AG04449 (cell line): ENCODE measurements at regions of chr3 and their contacts with region 1.

Region 1: DNA sequence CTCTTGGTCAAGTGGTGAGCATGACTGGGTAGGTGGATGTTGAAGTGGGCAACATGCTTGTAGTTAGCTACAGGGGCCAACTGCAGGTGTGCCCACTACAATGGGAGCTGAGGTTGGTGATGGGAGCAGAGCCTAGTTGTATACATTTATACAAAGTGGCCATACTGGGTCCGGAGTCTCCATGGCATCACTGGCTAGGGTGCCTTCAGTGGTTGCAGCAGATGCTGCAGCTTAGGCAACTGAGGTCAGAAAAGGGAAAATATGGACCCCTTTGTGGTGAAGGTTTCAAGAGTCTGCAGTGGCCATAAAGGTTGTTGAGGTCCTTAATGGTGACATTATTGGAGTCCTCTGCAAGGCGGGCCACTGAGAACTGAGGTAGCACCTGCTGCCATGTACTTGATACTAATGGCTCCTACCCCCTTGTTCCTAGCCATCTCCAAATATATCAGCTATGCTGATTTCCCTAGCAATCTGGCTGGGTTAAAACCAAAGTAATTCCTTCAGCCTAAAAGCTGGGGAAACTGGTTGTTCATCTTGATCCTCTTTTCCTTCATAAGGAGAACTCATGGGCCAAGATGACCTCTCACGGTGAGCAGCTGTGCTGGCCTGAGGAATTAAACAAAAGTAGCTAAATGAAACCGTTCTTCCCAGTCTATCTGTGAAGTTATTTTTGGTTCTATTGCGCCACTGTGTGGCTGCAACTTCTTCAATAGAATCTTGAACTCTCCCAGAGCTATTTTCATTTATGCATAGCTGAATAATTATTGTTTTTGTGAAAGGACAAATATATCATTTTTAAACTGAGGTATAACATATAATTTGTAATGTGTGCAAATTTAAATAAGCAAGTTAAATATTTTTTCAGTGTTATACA is 76.0 kb upstream of the PLSCR4 start:
- DNase-seq: peak; percentile 26
- H3K4me3 ChIP-seq: no peak overlapping the region
- CTCF ChIP-seq: peak; percentile 40

Region 2: DNA sequence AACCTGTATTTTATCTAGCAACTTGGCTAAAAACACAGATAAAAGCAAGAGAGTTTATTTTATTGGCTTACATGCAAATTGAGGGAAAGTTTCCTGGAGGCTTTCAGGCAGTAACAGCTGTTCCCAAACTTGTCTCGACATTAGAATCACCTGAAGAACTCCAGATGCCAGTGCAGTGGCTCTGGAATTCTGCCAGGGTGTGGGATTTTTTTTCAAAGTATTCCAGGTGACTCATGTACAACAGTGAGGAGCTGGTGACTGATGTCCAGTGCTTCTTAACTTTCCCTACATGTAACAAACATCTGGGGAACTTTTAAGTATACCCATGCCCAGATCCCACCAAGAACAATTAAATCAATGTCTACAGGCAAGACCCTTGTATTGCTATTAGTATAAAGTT is 142.3 kb before region 1 on chr3:
- CTCF ChIA-PET with region 1: interaction called, 208 read pairs
- POLR2A ChIA-PET with region 1: interaction called, 3 read pairs
- DNase-seq: no peak
- H3K4me3 ChIP-seq: no peak overlapping the region
- CTCF ChIP-seq: no peak

Region 3: DNA sequence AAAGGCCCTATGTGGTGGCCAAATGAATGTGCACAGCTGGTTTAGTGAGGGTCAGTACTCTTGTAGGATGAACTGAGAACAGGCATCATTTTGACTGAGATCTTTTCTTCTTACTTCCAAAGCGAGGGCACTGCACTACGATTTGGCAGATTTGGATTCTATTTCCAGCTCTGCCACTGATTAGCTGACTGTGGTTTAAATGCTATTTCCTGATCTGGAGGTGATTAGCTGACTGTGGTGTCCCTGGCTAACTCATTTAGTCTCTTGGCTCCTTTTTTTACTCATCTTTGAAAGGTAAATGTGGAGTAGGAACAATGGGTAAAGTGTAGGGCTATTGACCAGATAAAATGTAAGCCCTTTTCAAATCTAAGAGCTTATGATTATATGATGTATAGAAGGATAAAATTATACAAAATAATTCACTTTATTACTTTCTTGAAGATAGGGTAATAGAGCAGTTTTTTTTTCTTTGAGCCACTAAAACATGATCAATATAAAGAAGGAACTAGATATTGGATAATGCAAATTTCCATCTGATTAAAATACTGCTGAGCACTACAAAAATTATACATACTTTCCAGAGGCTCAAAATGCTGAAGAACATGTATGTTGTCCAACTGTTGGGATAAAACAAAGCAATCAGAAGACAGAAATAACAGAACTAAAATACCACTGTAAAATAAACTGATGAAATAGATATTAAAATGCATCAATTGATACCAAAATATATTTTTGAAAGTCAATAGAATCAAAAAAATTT is 126.3 kb before region 1 on chr3:
- CTCF ChIA-PET with region 1: interaction called, 27 read pairs
- POLR2A ChIA-PET with region 1: no interaction called
- DNase-seq: no peak
- H3K4me3 ChIP-seq: no peak overlapping the region
- CTCF ChIP-seq: no peak

Region 4: DNA sequence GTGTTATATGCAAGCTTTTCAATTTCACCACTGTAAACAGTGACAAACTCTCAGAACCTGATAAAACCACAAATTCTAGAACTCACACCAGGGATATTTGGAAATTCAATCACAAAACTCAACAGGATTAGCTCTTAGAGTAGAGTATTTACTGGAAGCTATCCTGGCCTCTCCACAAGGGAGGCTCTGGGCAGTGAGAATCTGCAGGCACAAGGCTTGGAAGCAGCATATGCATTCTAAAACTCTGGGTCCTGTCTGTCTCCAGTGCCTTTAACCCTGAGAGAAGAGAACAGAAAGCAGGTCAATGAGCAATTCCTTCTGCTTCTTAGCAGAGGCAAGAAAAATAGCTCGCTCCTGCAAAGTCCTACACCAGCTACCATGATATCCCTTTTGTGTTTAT is 99.4 kb before region 1 on chr3:
- CTCF ChIA-PET with region 1: interaction called, 100 read pairs
- POLR2A ChIA-PET with region 1: no interaction called
- DNase-seq: no peak
- H3K4me3 ChIP-seq: no peak overlapping the region
- CTCF ChIP-seq: no peak

Region 5: DNA sequence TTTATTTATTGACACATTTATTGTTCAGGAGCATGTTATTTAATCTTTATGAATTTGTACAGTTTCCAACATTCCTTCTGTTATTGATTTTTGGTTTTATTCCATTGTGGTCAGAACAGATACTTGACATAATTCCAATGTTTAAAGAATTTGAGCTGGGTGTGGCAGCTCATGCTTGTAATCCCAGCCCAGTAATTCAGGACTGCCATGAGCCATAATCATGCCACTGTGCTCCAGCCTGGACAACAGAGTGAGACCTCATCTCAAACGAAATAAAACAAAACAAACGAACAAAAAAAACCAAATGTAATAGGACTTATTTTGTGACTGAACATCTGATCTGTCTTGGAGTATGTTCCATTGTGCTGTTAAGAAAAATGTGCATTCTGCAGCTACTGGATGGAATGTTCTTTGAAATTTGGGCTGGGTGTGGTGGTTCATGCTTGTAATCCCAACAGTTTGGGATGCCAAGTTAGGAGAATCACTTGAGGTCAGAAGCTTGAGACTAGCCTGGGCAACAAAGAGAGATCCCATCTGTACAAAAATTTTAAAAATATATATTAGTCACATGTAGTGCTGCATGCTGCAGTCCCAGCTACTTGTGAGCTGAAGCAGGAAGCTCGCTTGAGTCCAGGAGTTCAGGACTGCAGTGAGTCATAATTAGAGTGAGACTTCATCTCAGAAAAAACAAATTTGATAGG is 13.3 kb before region 1 on chr3:
- CTCF ChIA-PET with region 1: interaction called, 34 read pairs
- POLR2A ChIA-PET with region 1: no interaction called
- DNase-seq: peak; percentile 57
- H3K4me3 ChIP-seq: no peak overlapping the region
- CTCF ChIP-seq: no peak